GM12878 (cell line): ENCODE measurements at regions of chr7 and their contacts with region 1.

Region 1: DNA sequence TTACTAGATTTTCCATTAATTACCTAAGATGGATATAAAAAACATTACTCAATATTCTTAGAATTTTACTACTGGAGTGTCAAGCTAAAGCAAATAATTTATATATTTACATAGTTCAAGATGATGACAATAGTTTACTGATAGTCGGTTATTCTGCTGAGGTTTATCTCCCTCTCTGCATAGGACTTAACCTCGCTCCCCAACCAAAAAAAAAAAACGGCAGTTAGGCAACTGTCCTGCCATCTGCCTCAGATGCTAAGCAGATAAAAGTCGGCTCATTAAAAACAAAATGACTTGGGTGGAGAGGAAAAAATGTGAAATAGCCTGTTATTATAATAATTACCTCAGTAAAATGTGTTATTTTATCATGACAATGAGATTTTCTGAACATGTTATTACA is 14.0 kb upstream of the ITGB8 start:
- DNase-seq: no peak
- ATAC-seq: no peak
- H3K4me3 ChIP-seq: no peak overlapping the region
- H3K27ac ChIP-seq: no peak overlapping the region
- H3K4me1 ChIP-seq: no peaks in the 10 kb centered on the region
- H3K27me3 ChIP-seq: no peaks in the 10 kb centered on the region
- CTCF ChIP-seq: no peak
- EP300 ChIP-seq: no peak
- POLR2A ChIP-seq: no peak
- RAD21 ChIP-seq: no peak

Region 2: GRCh38 chr7:20158684-20159083 is 158.0 kb before region 1 on chr7:
- CTCF ChIA-PET with region 1: interaction called, 35 read pairs
- POLR2A ChIA-PET with region 1: no interaction called
- RAD21 ChIA-PET with region 1: interaction called, 38 read pairs
- SMC1A ChIA-PET with region 1: interaction called, 36 read pairs
- in situ Hi-C with region 1: loop called (anchors 5 kb)
- intact Hi-C with region 1: loop called (anchors 1 kb)
- DNase-seq: no peak
- ATAC-seq: peak; percentile 77
- H3K4me3 ChIP-seq: no peak overlapping the region
- H3K27ac ChIP-seq: no peak overlapping the region
- H3K4me1 ChIP-seq: no peaks in the 10 kb centered on the region
- H3K27me3 ChIP-seq: no peaks in the 10 kb centered on the region
- CTCF ChIP-seq: peak; percentile 43 to 54 (median 48); a peak in 5 of 6 replicates
- EP300 ChIP-seq: no peak
- POLR2A ChIP-seq: no peak
- RAD21 ChIP-seq: peak; percentile 73

Region 3: GRCh38 chr7:20338285-20338684 is 21.6 kb after region 1 on chr7:
- CTCF ChIA-PET with region 1: interaction called, 9 read pairs
- POLR2A ChIA-PET with region 1: interaction called, 3 read pairs
- RAD21 ChIA-PET with region 1: interaction called, 8 read pairs
- SMC1A ChIA-PET with region 1: interaction called, 38 read pairs
- in situ Hi-C with region 1: no loop called
- intact Hi-C with region 1: no loop called
- DNase-seq: no peak
- ATAC-seq: no peak
- H3K4me3 ChIP-seq: no peak overlapping the region
- H3K27ac ChIP-seq: no peak overlapping the region
- H3K4me1 ChIP-seq: no peaks in the 10 kb centered on the region
- H3K27me3 ChIP-seq: no peaks in the 10 kb centered on the region; a peak in 1 of 4 replicates
- CTCF ChIP-seq: no peak
- EP300 ChIP-seq: no peak
- POLR2A ChIP-seq: no peak
- RAD21 ChIP-seq: no peak